Panc1 (cell line): ENCODE measurements at regions of chr20 and their contacts with region 1.

Region 1: GRCh38 chr20:12311094-12311865 is 393.6 kb downstream of the BTBD3 start:
- DNase-seq: no peak
- ATAC-seq: no peak
- H3K4me3 ChIP-seq: no peak overlapping the region
- H3K27ac ChIP-seq: no peak overlapping the region
- H3K4me1 ChIP-seq: no peaks in the 10 kb centered on the region
- H3K27me3 ChIP-seq: no peaks in the 10 kb centered on the region
- CTCF ChIP-seq: no peak

Region 2: GRCh38 chr20:12660918-12661317 is 349.6 kb after region 1 on chr20:
- CTCF ChIA-PET with region 1: no interaction called
- POLR2A ChIA-PET with region 1: no interaction called
- in situ Hi-C with region 1: no loop called
- intact Hi-C with region 1: no loop called
- DNase-seq: no peak
- ATAC-seq: no peak
- H3K4me3 ChIP-seq: no peak overlapping the region
- H3K27ac ChIP-seq: no peak overlapping the region
- H3K4me1 ChIP-seq: no peaks in the 10 kb centered on the region
- H3K27me3 ChIP-seq: no peaks in the 10 kb centered on the region
- CTCF ChIP-seq: peak; percentile 24

Region 3: DNA sequence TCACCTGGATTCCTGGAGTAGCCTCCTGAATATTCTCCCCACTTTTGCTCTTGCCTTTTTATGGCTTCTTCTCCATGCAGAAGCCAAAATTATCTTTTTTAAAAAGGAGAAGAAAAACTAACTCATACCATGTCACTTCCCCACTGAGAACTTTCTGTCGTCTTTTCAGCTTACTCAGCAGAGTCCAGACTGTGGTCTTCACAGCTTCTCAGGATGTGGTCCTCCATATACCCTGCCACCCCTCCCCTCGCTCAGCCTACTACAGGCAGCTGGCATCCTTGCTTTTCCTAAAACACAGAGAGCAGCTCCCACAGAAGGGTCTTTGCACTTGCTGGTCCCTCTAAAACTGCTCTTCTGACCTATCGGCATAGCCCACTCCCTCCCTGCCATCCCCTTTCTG is 820.4 kb after region 1 on chr20:
- CTCF ChIA-PET with region 1: interaction called, 13 read pairs
- POLR2A ChIA-PET with region 1: no interaction called
- in situ Hi-C with region 1: no loop called
- intact Hi-C with region 1: no loop called
- DNase-seq: no peak
- ATAC-seq: no peak
- H3K4me3 ChIP-seq: no peak overlapping the region
- H3K27ac ChIP-seq: no peak overlapping the region
- H3K4me1 ChIP-seq: no peaks in the 10 kb centered on the region
- H3K27me3 ChIP-seq: peaks cover 10% of the 10 kb centered on the region
- CTCF ChIP-seq: no peak